CD4-positive, alpha-beta memory T cell (primary cell): ENCODE measurements at regions of chr4 and their contacts with region 1.

Region 1: DNA sequence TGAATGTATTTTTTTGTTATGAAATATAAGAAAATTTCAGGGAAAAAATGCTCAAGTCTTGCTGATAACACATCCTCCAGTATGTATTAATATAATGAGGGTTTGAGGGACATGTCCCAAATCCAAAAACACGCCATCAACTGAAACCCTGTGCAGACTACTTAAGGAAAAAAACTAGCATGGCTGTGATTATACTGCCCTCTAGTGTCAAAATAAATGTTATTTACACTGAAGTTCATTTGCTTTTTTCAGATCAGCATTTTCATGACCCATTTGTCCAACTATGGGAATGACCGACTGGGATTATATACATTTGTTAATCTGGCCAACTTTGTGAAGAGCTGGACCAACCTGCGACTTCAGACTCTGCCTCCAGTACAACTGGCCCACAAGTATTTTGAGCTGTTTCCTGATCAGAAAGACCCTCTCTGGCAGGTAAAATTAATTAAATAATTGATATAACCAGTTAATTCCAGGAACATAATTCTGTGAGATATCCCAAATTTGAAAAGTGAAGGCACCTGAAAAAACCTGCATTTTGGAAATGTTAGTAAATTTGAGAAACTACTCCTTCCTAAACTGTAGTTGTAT is 128.5 kb downstream of the PRSS12 start:
- DNase-seq: peak in 4 of 5 donors; percentile 4 to 24 (median 15)
- H3K4me3 ChIP-seq: no peak overlapping the region
- H3K4me3 Mint-ChIP-seq: no peak overlapping the region
- H3K27ac ChIP-seq: no peak overlapping the region
- H3K27ac Mint-ChIP-seq: no peak overlapping the region
- H3K4me1 ChIP-seq: no peaks in the 10 kb centered on the region
- H3K4me1 Mint-ChIP-seq: no peaks in the 10 kb centered on the region
- H3K27me3 ChIP-seq: no peaks in the 10 kb centered on the region
- H3K27me3 Mint-ChIP-seq: peaks cover 8 to 9% of the 10 kb centered on the region in 2 donors

Region 2: DNA sequence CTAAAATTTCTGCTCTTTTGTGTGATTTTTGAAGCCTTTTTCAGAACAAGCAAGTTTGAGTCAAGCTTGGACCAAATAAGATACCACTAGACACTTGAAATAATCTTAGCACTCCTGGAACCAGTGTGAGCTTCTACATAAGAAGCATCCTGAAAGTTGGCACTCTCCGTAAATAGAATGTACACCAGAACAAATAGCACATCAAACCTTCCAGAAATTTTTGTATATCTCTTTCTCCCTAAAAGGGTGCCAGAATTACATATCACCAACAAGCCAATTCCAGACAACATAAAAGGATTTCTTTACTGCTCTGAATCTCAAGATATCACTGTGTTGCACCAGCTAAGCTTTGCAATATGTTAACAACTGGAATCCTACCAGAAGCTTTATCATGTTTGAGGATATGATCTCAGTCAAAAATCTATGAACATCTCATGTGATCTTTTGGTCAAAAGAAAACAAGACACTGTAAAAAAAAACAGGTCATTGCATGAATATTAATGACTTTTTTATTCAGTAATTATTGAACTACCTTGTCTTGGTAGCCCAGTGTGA is 11.3 kb after region 1 on chr4:
- CTCF ChIA-PET with region 1: interaction called, 16 read pairs
- POLR2A ChIA-PET with region 1: no interaction called
- intact Hi-C with region 1: no loop called
- DNase-seq: no peak
- H3K4me3 ChIP-seq: no peak overlapping the region
- H3K4me3 Mint-ChIP-seq: no peak overlapping the region
- H3K27ac ChIP-seq: no peak overlapping the region
- H3K27ac Mint-ChIP-seq: no peak overlapping the region
- H3K4me1 ChIP-seq: no peaks in the 10 kb centered on the region
- H3K4me1 Mint-ChIP-seq: no peaks in the 10 kb centered on the region
- H3K27me3 ChIP-seq: no peaks in the 10 kb centered on the region
- H3K27me3 Mint-ChIP-seq: peaks cover 3 to 5% of the 10 kb centered on the region in 2 donors